Left cardiac atrium (tissue), 4 donors: ENCODE measurements at regions of chr19 and their contacts with region 1.

Region 1: DNA sequence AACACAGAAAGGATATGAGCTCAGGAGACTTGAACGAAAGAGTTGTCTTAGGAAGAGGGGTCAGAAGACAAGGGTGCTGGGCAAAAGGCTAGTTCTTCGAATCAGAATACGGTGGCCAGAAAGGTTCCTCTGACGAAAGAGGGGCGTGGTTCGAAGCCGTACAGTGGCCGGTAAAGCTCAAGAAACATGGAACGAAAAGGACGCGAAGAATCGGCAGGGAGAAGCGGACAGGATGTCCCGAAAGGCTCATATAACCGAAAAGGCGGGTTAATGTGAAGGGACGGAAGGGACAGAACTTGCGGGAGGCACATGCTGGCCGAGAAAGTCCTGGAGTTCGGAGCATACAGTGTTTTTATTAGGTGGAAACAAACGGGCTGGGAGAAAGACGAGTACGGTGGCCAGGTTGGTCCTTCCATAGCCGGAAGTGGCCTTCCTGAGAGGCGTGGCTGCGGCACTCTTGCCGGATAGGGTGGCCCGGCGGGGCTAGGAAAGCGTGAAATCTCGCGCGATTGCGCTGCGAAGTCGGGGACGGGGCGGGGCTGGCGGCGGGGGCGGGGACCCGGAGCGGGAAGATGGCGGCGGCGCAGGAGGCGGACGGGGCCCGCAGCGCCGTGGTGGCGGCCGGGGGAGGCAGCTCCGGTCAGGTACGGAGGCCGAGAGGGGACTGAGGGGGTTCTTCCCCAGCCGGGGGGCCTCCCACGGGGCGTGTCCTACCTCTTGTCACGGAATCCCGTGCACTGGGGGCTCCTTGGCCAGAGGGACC is at the start of gene CLPTM1:
- DNase-seq: peak; percentile 98
- ATAC-seq: peak; percentile 97
- total RNA-seq, gene CLPTM1: 90.7 to 107 TPM

Region 2: DNA sequence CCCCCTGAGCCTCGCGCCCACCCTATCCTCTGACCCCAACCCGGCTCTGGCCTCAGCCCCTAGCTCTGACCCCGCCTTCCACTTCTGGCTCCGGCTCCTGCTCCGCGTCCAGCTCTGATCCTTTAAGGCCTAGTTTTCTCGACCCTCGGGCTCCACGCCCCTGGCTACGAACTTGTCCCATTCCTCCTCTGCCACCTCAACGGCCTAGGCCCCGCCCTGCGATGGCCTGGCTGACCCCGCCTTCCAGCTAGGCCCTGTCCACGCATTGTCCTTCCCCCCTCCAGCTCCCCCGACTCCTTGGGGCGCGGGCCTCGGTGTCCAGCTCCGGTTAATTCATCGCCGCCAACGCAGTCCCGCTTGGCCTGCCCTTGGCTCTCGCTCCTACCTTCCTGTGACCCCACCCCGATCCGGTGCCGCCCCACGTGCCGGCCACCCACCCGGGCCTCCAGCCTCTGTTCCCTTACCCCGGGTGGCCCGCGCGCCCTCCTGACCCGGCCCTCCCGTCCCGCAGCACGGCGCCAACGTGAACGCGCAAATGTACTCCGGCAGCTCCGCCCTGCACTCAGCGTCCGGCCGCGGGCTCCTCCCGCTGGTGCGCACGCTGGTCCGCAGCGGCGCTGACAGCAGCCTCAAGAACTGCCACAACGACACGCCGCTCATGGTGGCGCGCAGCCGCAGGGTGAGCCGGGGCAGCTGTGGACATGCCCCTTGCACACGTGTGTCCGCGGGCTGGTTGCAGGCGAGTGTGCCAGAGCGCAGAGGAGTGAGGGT is 197.1 kb before region 1 on chr19:
- intact Hi-C with region 1: no loop called
- DNase-seq: peak; percentile 89
- ATAC-seq: peak; percentile 55 to 65

Region 3: GRCh38 chr19:44903602-44904425 is 51.2 kb before region 1 on chr19:
- intact Hi-C with region 1: loop called (anchors 2 to 5 kb)
- DNase-seq: peak; percentile 68
- ATAC-seq: peak; percentile 70 to 72